Caco-2 (cell line): ENCODE measurements at regions of chr7 and their contacts with region 1.

Region 1: GRCh38 chr7:51727441-51727840 is 410.8 kb upstream of the COBL start:
- DNase-seq: no peak
- H3K4me3 ChIP-seq: no peak overlapping the region
- H3K4me3 Mint-ChIP-seq: no peak overlapping the region
- H3K27ac Mint-ChIP-seq: no peak overlapping the region
- H3K4me1 ChIP-seq: no peaks in the 10 kb centered on the region
- H3K4me1 Mint-ChIP-seq: no peaks in the 10 kb centered on the region
- H3K27me3 ChIP-seq: no peaks in the 10 kb centered on the region
- H3K27me3 Mint-ChIP-seq: peaks cover 3% of the 10 kb centered on the region
- CTCF ChIP-seq: no peak

Region 2: GRCh38 chr7:51366930-51367613 is 360.4 kb before region 1 on chr7:
- CTCF ChIA-PET with region 1: no interaction called
- POLR2A ChIA-PET with region 1: no interaction called
- intact Hi-C with region 1: no loop called
- DNase-seq: peak; percentile 79
- H3K4me3 ChIP-seq: no peak overlapping the region
- H3K4me3 Mint-ChIP-seq: no peak overlapping the region
- H3K27ac Mint-ChIP-seq: peak overlapping the region; percentile 52
- H3K4me1 ChIP-seq: peaks cover 14% of the 10 kb centered on the region
- H3K4me1 Mint-ChIP-seq: peaks cover 22% of the 10 kb centered on the region
- H3K27me3 ChIP-seq: no peaks in the 10 kb centered on the region
- H3K27me3 Mint-ChIP-seq: no peaks in the 10 kb centered on the region
- CTCF ChIP-seq: peak; percentile 89 to 90

Region 3: DNA sequence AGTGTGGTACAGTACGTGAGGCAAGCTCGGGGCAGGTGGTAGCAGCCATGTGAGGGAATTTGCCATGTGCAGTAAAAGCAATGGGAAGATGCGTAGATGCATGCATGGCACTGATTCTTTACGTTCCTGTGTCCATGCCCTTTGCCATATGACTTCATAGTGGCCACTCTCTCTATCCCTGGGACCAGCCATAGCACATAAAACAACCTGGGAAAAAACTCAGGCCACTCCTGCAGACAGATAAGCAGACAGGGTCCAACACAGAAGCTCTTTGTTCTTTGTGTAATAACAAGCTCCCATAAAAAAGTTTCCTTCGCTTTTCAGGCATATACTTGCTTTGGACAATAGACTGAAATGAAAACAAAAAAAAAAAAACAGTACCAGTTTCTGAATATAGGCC is 685.6 kb after region 1 on chr7:
- CTCF ChIA-PET with region 1: no interaction called
- POLR2A ChIA-PET with region 1: no interaction called
- intact Hi-C with region 1: no loop called
- DNase-seq: no peak
- H3K4me3 ChIP-seq: no peak overlapping the region
- H3K4me3 Mint-ChIP-seq: no peak overlapping the region
- H3K27ac Mint-ChIP-seq: no peak overlapping the region
- H3K4me1 ChIP-seq: no peaks in the 10 kb centered on the region
- H3K4me1 Mint-ChIP-seq: no peaks in the 10 kb centered on the region
- H3K27me3 ChIP-seq: no peaks in the 10 kb centered on the region
- H3K27me3 Mint-ChIP-seq: no peaks in the 10 kb centered on the region
- CTCF ChIP-seq: no peak

Region 4: DNA sequence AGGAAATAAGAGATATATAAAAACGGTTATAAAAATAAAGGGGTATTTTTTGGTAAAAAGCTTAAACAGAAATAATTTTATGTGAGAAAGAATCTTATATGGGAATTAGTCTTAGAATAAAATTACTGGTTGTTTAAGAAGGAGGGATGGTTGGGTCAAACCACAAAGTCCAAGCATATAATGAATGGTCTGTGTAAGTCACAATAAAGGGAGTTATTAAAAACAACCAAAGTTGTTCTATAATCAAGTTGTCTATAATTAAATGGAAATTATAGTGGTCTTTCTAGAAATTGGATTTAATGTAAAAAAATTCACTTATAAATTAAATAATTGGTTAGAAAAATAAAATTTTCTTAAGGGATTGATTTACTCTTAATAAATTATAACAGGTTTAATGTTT is 1612.8 kb after region 1 on chr7:
- CTCF ChIA-PET with region 1: no interaction called
- POLR2A ChIA-PET with region 1: no interaction called
- intact Hi-C with region 1: loop called (anchors 10 kb)
- DNase-seq: no peak
- H3K4me3 ChIP-seq: no peak overlapping the region
- H3K4me3 Mint-ChIP-seq: no peak overlapping the region
- H3K27ac Mint-ChIP-seq: no peak overlapping the region
- H3K4me1 ChIP-seq: no peaks in the 10 kb centered on the region
- H3K4me1 Mint-ChIP-seq: no peaks in the 10 kb centered on the region
- H3K27me3 ChIP-seq: no peaks in the 10 kb centered on the region
- H3K27me3 Mint-ChIP-seq: no peaks in the 10 kb centered on the region
- CTCF ChIP-seq: no peak